Endothelial cell of umbilical vein (primary cell): ENCODE measurements at regions of chr6 and their contacts with region 1.

Region 1: DNA sequence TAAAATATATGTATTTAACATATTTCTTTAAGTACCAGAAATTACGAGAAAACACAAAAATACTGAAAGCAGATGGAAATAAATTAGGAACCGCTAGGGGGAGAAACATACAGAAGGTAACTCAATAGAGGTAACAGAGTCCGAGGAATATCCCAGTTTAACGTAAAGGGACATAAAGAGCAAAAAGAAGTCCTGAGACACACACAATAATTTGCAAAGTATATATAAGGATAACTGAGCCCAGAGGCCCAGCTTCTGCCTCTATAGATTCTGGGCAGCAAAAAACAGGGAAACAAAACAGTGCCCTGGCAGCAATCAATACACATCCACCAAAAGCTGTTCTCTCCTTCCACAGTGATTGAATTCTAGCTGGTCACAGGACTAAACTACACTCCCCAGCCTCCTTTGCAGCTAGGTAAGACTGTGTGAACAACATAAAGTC is 15.1 kb downstream of the TBC1D32 start:
- DNase-seq: peak; percentile 52
- H3K4me3 ChIP-seq: peak overlapping the region in 2 of 3 experiments; percentile 12 to 52
- H3K27ac ChIP-seq: no peak overlapping the region
- H3K4me1 ChIP-seq: peaks cover 5% of the 10 kb centered on the region
- H3K27me3 ChIP-seq: no peaks in the 10 kb centered on the region
- CTCF ChIP-seq: peak; percentile 31
- POLR2A ChIP-seq: no peak

Region 2: DNA sequence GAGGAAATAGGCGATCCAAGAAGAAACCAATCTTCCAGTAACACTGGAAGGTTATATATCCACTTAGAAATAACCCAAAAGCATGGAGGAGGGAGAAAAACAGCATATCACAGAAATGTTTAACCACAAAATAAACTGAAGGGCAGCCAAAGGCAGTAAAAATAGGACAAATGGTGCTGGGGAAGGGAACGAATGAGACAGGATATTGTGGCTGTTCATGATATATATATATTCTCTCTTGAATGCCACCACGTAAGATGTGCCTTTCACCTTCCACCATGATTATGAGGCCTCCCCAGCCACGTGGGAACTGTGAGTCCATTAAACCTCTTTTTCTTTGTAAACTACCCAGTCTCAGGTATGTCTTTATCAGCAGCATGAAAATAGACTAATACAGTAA is 147.3 kb before region 1 on chr6:
- CTCF ChIA-PET with region 1: no interaction called
- POLR2A ChIA-PET with region 1: no interaction called
- dilution Hi-C with region 1: no loop called
- intact Hi-C with region 1: no loop called
- DNase-seq: no peak
- H3K4me3 ChIP-seq: no peak overlapping the region
- H3K27ac ChIP-seq: no peak overlapping the region
- H3K4me1 ChIP-seq: no peaks in the 10 kb centered on the region
- H3K27me3 ChIP-seq: no peaks in the 10 kb centered on the region
- CTCF ChIP-seq: no peak
- POLR2A ChIP-seq: no peak

Region 3: DNA sequence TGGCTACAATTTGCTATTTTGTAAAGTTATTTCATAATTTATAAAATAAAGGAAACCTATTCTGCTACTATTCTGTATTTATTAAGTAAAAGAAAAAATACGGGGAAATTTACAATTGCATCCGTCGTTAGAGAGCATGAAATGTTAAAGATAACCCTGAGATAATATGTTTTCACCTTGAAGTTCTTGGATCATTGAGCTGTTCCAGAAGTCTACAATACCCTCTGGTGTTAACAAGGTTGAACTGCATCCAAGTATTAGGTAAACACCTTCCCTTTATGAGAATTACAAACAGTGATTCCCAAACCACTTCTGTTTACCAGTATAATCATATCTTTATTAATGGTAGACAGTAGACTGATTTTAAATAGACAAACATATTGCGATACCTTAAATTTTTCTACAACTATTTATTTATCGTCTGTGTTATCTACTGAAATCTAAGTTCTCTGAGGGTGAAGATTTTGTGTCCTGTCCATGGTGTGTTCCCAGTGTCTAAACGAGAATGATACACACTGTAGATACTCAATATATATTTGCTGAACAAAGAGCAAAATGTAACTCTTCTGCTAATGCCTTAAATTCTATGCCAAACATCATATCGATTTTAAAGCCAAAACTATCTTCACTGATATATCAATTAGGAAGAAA is 13.1 kb before region 1 on chr6:
- CTCF ChIA-PET with region 1: interaction called, 63 read pairs
- POLR2A ChIA-PET with region 1: no interaction called
- dilution Hi-C with region 1: no loop called
- intact Hi-C with region 1: no loop called
- DNase-seq: peak; percentile 54
- H3K4me3 ChIP-seq: no peak overlapping the region
- H3K27ac ChIP-seq: no peak overlapping the region
- H3K4me1 ChIP-seq: no peaks in the 10 kb centered on the region
- H3K27me3 ChIP-seq: no peaks in the 10 kb centered on the region
- CTCF ChIP-seq: peak; percentile 33 to 43
- POLR2A ChIP-seq: no peak

Region 4: DNA sequence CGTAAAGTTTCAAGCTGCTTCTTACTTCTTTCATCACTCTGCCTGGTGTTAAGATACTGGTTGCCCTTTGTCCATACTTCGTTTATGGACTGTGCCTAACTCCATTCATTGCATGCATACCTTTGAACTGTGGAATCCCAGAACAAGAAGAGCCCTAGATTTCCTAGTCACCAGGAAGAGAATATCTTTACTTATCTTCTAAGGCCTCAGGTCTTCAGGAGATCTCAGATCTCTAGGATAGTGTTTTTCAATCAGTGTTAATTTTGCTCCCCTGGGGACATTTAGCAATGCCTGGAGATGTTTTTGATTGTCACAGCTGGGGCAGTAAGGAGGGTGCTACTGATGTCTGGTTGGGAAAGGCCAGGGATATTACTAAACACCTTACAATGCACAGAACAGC is 80.8 kb after region 1 on chr6:
- CTCF ChIA-PET with region 1: interaction called, 17 read pairs
- POLR2A ChIA-PET with region 1: no interaction called
- dilution Hi-C with region 1: no loop called
- intact Hi-C with region 1: no loop called
- DNase-seq: no peak
- H3K4me3 ChIP-seq: no peak overlapping the region
- H3K27ac ChIP-seq: no peak overlapping the region
- H3K4me1 ChIP-seq: no peaks in the 10 kb centered on the region
- H3K27me3 ChIP-seq: no peaks in the 10 kb centered on the region
- CTCF ChIP-seq: no peak
- POLR2A ChIP-seq: no peak

Region 5: GRCh38 chr6:122033539-122034181 is 714.5 kb after region 1 on chr6:
- CTCF ChIA-PET with region 1: interaction called, 11 read pairs
- POLR2A ChIA-PET with region 1: no interaction called
- dilution Hi-C with region 1: no loop called
- intact Hi-C with region 1: no loop called
- DNase-seq: peak; percentile 69
- H3K4me3 ChIP-seq: no peak overlapping the region
- H3K27ac ChIP-seq: no peak overlapping the region
- H3K4me1 ChIP-seq: no peaks in the 10 kb centered on the region
- H3K27me3 ChIP-seq: no peaks in the 10 kb centered on the region
- CTCF ChIP-seq: peak; percentile 35 to 51
- POLR2A ChIP-seq: no peak

Region 6: GRCh38 chr6:122184401-122184827 is 865.3 kb after region 1 on chr6:
- CTCF ChIA-PET with region 1: interaction called, 23 read pairs
- POLR2A ChIA-PET with region 1: no interaction called
- dilution Hi-C with region 1: no loop called
- intact Hi-C with region 1: no loop called
- DNase-seq: peak; percentile 32
- H3K4me3 ChIP-seq: no peak overlapping the region
- H3K27ac ChIP-seq: no peak overlapping the region
- H3K4me1 ChIP-seq: no peaks in the 10 kb centered on the region
- H3K27me3 ChIP-seq: no peaks in the 10 kb centered on the region
- CTCF ChIP-seq: peak in 1 of 2 donors; percentile 15
- POLR2A ChIP-seq: no peak